Heart right ventricle (tissue), 16 donors: ENCODE measurements at regions of chr1 and their contacts with region 1.

Region 1: DNA sequence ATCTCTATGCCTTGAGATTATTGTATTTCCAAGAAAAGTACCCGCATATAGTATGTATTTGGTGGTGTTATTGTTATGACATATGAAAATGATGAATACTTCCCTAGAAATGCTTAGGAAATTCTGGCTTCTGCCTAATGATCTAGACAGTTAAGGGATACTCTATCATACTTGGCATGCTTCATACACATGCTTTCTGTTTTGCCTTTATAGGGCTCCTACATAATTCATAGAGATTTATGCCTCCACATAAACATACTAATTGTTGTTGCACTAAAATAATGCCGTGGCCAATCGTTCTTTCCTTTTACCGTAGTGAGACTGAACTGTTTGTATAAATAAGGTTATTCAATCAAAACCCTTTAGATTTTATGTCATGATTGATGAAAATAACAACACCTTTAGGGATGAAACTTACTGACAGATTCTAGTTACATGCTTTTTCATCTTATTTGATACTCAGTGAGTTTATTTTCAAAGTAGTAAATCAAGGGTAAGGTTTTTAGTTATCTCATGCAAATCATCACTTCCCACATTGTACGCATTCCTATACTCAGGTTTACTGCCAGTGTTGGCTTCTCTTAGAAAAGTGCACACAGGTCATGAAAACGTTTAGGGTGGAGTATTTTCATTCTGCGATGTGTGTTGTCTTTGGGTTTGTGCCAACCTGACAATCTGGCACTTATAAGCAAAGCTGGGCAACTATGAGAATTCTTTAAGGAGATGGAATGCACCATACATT is 40.5 kb upstream of the SCYL3 start:
- DNase-seq: no peak
- ATAC-seq: no peak
- H3K4me3 ChIP-seq: no peak overlapping the region
- H3K27ac ChIP-seq: no peak overlapping the region
- H3K4me1 ChIP-seq: peaks cover 0 to 13% (median 0%) of the 10 kb centered on the region in 9 donors
- H3K27me3 ChIP-seq: no peaks in the 10 kb centered on the region
- CTCF ChIP-seq: no peak

Region 2: DNA sequence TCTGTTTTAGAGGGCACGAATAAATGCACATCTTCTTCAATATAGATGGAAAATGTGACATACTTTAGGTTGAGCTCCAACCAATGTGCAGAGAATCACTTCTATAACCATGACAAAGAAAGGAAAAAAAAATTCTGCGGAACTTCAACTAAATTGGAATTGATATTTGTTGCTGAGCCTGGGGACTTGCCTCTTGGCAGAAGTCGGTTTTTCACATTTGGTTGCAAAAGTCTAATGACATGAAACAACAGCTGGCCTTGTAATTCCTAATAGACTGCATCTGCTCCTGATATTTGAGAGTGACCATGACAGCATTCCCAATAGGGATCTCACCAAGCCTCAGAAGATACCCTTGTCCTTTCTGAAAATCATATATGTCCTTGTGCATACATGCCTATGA is 842.6 kb after region 1 on chr1:
- intact Hi-C with region 1: loop called in 1 of 10 experiments (anchors 10 kb)
- DNase-seq: peak in 1 of 2 donors; percentile 15
- ATAC-seq: peak in 6 of 8 donors; percentile 28 to 89 (median 54)
- H3K4me3 ChIP-seq: no peak overlapping the region
- H3K27ac ChIP-seq: peak overlapping the region in 1 of 10 donors; percentile 40
- H3K4me1 ChIP-seq: no peaks in the 10 kb centered on the region
- H3K27me3 ChIP-seq: no peaks in the 10 kb centered on the region
- CTCF ChIP-seq: no peak

Region 3: DNA sequence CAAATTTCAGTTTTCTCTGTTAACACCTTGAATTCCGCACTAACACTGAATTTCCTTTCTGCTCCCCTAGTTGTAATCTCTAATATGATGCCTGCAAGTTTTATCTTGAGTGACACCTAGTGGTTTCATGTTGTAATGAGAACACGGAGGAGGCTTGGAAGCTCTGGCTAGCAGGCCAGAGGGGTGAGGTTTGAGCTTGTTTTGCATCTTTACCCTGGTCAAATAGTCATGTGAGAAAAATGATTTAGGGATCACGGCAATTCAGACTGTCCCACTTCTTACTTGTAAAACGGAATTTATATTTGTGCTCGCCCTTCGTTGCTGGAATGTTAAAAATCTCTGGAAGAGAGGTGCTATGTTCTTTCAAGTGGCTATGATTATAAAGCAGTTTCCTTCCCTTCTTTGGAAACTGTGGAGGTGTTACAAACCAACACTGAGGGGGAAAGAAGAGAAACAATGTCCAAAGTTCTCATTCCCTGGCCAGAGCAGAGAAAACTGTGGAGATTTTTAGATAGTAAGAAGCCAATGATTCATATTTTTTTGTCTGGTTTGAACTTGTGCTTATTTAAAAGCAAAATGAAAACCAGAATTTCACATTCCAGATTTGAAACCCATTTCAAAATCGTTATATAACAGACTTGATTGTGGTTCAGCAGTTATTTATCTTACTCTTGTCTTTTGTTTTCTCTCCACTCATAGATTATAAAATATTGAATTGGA is 995.8 kb after region 1 on chr1:
- intact Hi-C with region 1: loop called in 4 of 10 experiments (anchors 5 to 10 kb)
- DNase-seq: peak in 1 of 2 donors; percentile 6
- ATAC-seq: peak; percentile 69 to 94 (median 92)
- H3K4me3 ChIP-seq: peak overlapping the region in 2 of 10 donors; percentile 9 to 17
- H3K27ac ChIP-seq: peak overlapping the region in 6 of 10 donors; percentile 8 to 55 (median 44)
- H3K4me1 ChIP-seq: peaks cover 0 to 17% (median 7%) of the 10 kb centered on the region in 9 donors
- H3K27me3 ChIP-seq: no peaks in the 10 kb centered on the region
- CTCF ChIP-seq: peak; percentile 46 to 84 (median 73)